ENCODE measurements at regions of chr9 and their contacts with region 1.

Region 1: GRCh38 chr9:124708633-124709291 is 62.3 kb downstream of the NR6A1 start:
- H3K4me3 ChIP-seq: no peak overlapping the region
- H3K27ac ChIP-seq: no peak overlapping the region
- H3K4me1 ChIP-seq: no peaks in the 10 kb centered on the region
- CTCF ChIP-seq: no peak

Region 2: GRCh38 chr9:124629600-124629999 is 79.2 kb before region 1 on chr9:
- CTCF ChIA-PET with region 1: interaction called, 24 read pairs
- POLR2A ChIA-PET with region 1: no interaction called
- H3K4me3 ChIP-seq: no peak overlapping the region
- H3K27ac ChIP-seq: no peak overlapping the region
- H3K4me1 ChIP-seq: no peaks in the 10 kb centered on the region
- CTCF ChIP-seq: no peak

Region 3: GRCh38 chr9:124686918-124687317 is 21.8 kb before region 1 on chr9:
- CTCF ChIA-PET with region 1: interaction called, 12 read pairs
- POLR2A ChIA-PET with region 1: no interaction called
- H3K4me3 ChIP-seq: no peak overlapping the region
- H3K27ac ChIP-seq: no peak overlapping the region
- H3K4me1 ChIP-seq: no peaks in the 10 kb centered on the region
- CTCF ChIP-seq: no peak

Region 4: DNA sequence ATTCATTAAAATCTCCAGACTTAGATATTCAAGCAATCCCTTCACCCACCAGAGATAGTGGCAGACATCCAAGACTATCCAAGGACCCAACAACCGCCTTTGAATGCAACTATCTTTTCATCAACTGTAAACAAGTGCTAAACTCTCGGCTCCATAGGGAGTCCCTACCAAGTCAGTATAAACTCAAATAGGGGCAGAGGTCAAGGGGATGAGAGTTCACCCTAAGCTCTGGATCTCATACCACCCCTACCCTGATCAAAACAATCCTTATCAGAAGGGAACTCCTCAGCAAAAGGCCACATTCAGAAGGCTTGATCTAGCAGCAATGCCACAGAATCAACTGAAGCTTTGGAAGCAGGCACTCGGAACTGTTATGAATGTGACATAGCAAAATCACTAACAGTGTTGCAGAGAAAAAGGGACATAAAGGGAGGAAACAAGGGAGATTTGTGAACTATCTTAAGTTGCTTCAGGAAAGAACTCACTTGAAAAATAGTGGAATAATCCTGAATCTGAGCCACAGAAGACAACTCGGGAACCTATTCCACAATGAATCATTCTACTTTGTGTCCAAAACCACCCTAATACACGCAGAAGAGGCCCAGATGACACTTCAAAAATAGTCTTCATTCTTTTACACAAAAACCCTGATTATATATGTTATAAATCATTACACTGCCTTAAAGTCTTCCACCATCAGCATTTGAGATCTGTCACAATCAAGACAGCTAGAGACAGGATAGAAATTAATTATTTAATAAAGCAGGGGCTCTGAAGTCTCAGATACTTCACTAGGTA is 12.5 kb after region 1 on chr9:
- CTCF ChIA-PET with region 1: interaction called, 28 read pairs
- POLR2A ChIA-PET with region 1: no interaction called
- H3K4me3 ChIP-seq: no peak overlapping the region
- H3K27ac ChIP-seq: peak overlapping the region; percentile 29
- H3K4me1 ChIP-seq: peaks cover 19% of the 10 kb centered on the region
- CTCF ChIP-seq: no peak

Region 5: GRCh38 chr9:124754289-124754688 is 45.5 kb after region 1 on chr9:
- CTCF ChIA-PET with region 1: interaction called, 22 read pairs
- POLR2A ChIA-PET with region 1: no interaction called
- H3K4me3 ChIP-seq: no peak overlapping the region
- H3K27ac ChIP-seq: no peak overlapping the region
- H3K4me1 ChIP-seq: peaks cover 34% of the 10 kb centered on the region
- CTCF ChIP-seq: no peak

Region 6: DNA sequence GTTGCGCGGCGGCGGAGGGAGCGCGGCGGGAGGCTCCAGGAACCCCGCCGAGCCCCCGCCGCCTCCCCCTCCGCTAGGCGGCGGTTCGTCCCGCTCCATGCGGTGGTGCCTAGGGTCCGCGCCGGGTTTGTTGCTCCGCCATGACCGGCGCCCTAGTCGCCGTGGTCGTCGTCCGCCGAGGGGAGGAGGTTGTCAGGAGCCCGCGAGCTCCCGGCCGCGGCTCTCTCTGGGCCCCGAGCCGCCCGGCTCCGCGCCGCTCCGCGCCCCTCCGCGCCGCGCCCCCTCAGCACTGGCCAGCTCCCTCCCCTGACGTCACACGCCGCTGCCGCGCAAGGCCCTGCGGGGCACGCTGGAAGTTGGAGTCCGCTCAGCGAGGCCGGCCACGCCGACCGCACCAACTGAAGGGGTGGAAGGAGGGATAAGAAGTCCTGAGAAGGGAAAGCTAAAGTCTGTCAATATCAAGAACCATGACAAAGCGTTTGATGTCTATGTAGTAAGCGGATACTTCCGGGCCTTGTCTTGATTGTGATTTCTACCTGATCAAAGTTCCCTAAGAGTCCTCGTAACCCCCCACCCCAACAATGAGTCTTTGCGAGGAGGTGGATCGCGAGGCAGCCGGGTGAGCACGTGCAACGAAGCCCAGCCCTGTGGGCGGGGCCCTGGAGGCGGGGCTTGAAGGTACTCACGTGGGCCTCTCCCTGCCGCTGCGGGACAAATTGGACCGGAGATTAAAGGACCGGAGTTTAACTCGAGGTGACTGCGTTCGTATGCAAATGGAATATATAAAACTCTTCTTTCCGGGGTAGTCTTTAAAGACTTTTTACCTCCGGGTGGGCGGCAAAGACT is 62.5 kb after region 1 on chr9 and contains the start of gene NR6A1:
- CTCF ChIA-PET with region 1: interaction called, 46 read pairs
- POLR2A ChIA-PET with region 1: no interaction called
- H3K4me3 ChIP-seq: peak within 1 kb of the TSS; percentile 96
- H3K27ac ChIP-seq: peak within 1 kb of the TSS; percentile 91
- H3K4me1 ChIP-seq: peaks cover 16% of the 10 kb centered on the region; the same call in 1 of the 2 replicates
- CTCF ChIP-seq: peak; percentile 51; the same call in 1 of the 2 replicates

Region 7: GRCh38 chr9:124784509-124784908 is 75.7 kb after region 1 on chr9:
- CTCF ChIA-PET with region 1: no interaction called
- POLR2A ChIA-PET with region 1: no interaction called
- H3K4me3 ChIP-seq: no peak overlapping the region
- H3K27ac ChIP-seq: no peak overlapping the region
- H3K4me1 ChIP-seq: no peaks in the 10 kb centered on the region
- CTCF ChIP-seq: no peak